H1 (cell line): ENCODE measurements at regions of chr18 and their contacts with region 1.

Region 1: DNA sequence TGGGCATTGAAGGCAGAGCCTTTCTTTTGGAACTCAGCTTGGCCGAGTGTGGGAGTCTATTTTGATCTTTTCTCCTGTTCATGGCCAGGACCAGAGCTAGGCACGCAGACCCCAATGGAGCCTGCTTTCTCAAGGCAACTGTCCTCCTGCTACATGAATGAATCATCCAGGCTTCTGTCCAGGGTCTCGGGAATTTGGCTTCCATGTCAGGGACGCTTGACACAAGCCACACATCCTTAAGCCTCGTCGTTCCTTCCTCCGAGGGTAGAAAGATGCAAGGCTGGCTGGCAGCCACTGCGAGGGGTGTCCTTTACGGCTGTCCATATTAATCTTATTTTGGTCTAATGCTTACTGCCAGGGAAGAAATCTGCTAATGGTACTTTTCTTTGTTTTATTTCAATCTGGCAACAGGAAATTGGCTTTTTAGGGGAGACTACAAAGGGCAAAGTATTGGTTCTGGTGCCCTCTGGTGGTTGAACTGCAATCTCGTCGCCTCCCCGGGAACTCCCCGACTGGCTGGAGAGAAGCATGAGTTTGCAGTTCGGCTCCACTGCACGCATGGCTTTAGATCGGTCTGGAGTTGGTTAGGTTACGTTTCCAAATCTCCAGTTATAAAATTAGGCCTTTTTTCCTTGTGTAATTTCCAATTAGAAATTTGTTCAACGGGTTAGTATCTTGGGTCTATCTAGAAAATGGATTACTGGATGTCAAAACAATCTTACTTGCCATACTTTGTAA is 135.2 kb downstream of the ALPK2 start:
- DNase-seq: peak; percentile 54 to 86
- H3K4me3 ChIP-seq: no peak overlapping the region
- H3K27ac ChIP-seq: no peak overlapping the region
- H3K4me1 ChIP-seq: peaks cover 0 to 3% (median 1%) of the 10 kb centered on the region in 4 experiments; a peak in 3 of 7 replicates
- H3K27me3 ChIP-seq: no peaks in the 10 kb centered on the region
- CTCF ChIP-seq: peak; percentile 80 to 88 (median 88)
- EP300 ChIP-seq: no peak
- POLR2A ChIP-seq: no peak
- RAD21 ChIP-seq: peak; percentile 89 to 93

Region 2: GRCh38 chr18:58338961-58339592 is 154.6 kb before region 1 on chr18:
- CTCF ChIA-PET with region 1: interaction called, 13 read pairs
- POLR2A ChIA-PET with region 1: no interaction called
- DNase-seq: peak; percentile 29 to 61
- H3K4me3 ChIP-seq: peak overlapping the region in 2 of 4 experiments; percentile 1 to 51; a peak in 3 of 8 replicates
- H3K27ac ChIP-seq: no peak overlapping the region; the same call in 1 of the 2 replicates
- H3K4me1 ChIP-seq: peaks cover 12 to 51% (median 37%) of the 10 kb centered on the region in 4 experiments
- H3K27me3 ChIP-seq: no peaks in the 10 kb centered on the region
- CTCF ChIP-seq: no peak
- EP300 ChIP-seq: no peak
- POLR2A ChIP-seq: no peak
- RAD21 ChIP-seq: no peak

Region 3: GRCh38 chr18:58402247-58402646 is 91.4 kb before region 1 on chr18:
- CTCF ChIA-PET with region 1: interaction called, 62 read pairs
- POLR2A ChIA-PET with region 1: interaction called, 4 read pairs
- DNase-seq: no peak
- H3K4me3 ChIP-seq: no peak overlapping the region
- H3K27ac ChIP-seq: no peak overlapping the region
- H3K4me1 ChIP-seq: peaks cover 0 to 2% (median under 1%) of the 10 kb centered on the region in 4 experiments; a peak in 4 of 7 replicates
- H3K27me3 ChIP-seq: no peaks in the 10 kb centered on the region
- CTCF ChIP-seq: no peak
- EP300 ChIP-seq: no peak
- POLR2A ChIP-seq: no peak
- RAD21 ChIP-seq: no peak

Region 4: GRCh38 chr18:58416704-58417683 is 76.7 kb before region 1 on chr18:
- CTCF ChIA-PET with region 1: interaction called, 10 read pairs
- POLR2A ChIA-PET with region 1: no interaction called
- DNase-seq: no peak
- H3K4me3 ChIP-seq: no peak overlapping the region
- H3K27ac ChIP-seq: no peak overlapping the region
- H3K4me1 ChIP-seq: no peaks in the 10 kb centered on the region
- H3K27me3 ChIP-seq: 0 out of 7 replicates have a peak, but pooled peaks cover 0 to 2% (median 0%) of the 10 kb centered on the region in 4 experiments
- CTCF ChIP-seq: no peak
- EP300 ChIP-seq: no peak
- POLR2A ChIP-seq: no peak
- RAD21 ChIP-seq: no peak

Region 5: DNA sequence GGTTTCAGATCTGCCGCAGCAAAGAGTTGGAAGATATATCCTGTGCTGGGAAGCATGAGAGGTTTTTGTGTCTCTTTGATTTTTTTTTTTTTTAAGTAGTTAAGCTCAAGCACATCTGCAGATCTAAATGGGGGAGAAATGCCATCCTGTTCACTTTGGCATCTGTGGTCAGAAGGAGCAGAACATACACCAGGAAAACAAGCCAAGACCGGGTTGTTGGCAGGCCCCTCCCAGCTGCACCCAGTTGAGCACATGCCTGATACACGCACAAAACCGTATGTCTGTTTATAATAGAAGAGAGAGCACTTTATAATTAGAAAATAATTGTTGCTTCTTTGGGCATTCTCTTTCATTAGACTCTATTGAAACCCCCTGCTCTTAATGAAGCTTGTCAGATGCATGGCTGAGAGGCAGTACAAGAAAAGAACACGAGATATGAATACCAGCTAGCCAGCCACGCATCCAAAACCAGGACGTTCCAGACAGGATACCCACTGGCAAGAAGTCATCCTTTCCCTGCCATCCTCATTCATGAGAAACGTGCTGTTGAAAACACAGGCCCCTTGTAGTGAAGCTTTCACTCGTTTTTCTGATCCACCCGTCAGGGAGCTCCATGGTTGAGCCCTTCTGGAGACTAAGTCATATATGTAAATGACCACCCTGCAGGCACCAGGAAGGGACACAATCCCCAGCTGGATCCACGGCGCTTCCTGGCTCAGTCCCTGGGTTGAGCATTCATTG is 17.0 kb before region 1 on chr18:
- CTCF ChIA-PET with region 1: interaction called, 41 read pairs
- POLR2A ChIA-PET with region 1: no interaction called
- DNase-seq: no peak
- H3K4me3 ChIP-seq: no peak overlapping the region
- H3K27ac ChIP-seq: no peak overlapping the region
- H3K4me1 ChIP-seq: peaks cover 0 to 4% (median 0%) of the 10 kb centered on the region in 4 experiments; a peak in 1 of 7 replicates
- H3K27me3 ChIP-seq: no peaks in the 10 kb centered on the region
- CTCF ChIP-seq: no peak
- EP300 ChIP-seq: no peak
- POLR2A ChIP-seq: no peak
- RAD21 ChIP-seq: no peak

Region 6: GRCh38 chr18:58511897-58512581 is 18.4 kb after region 1 on chr18:
- CTCF ChIA-PET with region 1: interaction called, 22 read pairs
- POLR2A ChIA-PET with region 1: interaction called, 3 read pairs
- DNase-seq: peak; percentile 75
- H3K4me3 ChIP-seq: peak overlapping the region; percentile 11 to 48 (median 32); a peak in 5 of 8 replicates
- H3K27ac ChIP-seq: peak overlapping the region; percentile 78
- H3K4me1 ChIP-seq: peaks cover 11 to 19% (median 16%) of the 10 kb centered on the region in 4 experiments
- H3K27me3 ChIP-seq: no peaks in the 10 kb centered on the region
- CTCF ChIP-seq: no peak
- EP300 ChIP-seq: peak in 1 of 2 experiments; percentile 62; a peak in 1 of 3 replicates
- POLR2A ChIP-seq: no peak
- RAD21 ChIP-seq: no peak

Region 7: GRCh38 chr18:58624011-58624410 is 130.3 kb after region 1 on chr18:
- CTCF ChIA-PET with region 1: no interaction called
- POLR2A ChIA-PET with region 1: no interaction called
- DNase-seq: no peak
- H3K4me3 ChIP-seq: no peak overlapping the region
- H3K27ac ChIP-seq: no peak overlapping the region
- H3K4me1 ChIP-seq: peaks cover 0 to 8% (median 4%) of the 10 kb centered on the region in 4 experiments; a peak in 5 of 7 replicates
- H3K27me3 ChIP-seq: no peaks in the 10 kb centered on the region
- CTCF ChIP-seq: no peak
- EP300 ChIP-seq: no peak
- POLR2A ChIP-seq: no peak
- RAD21 ChIP-seq: no peak

Region 8: DNA sequence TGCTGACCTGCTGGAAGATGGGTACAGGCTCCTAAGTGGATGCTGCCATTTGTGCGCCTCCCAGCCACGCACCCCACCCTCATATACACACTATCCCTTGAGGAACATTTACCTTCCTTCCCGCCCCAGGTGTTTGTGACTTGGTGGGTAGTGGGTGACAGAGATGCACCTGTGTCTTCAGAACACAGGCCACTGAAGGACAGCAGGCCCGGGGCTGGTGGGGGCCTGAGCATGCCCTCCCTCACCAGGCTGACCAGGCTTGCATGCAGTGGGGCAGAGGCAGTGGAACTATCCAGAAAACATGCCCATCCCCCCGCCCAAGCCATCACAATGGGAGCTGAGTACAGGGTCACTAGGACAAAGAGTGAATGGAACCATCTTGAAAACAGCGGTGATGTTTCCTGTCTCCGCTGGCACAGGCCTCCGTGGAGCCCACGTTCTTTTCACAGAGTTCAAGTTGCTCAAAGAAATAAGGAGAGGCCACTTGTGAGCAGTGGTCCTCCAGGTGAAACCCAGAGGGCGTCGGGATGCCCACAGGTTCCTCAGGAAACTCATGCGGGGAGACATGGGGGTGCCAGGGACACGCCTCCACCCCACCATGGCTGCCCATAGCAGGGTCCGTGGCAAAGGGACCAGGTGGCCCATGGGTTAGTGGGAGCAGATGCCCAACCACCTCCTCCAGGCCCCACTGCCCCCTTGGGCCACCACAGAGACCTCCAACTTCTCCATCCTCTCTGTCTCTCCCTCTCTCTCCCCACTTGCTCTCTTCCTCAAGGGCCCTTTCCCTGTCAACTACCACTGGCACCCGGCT is 268.5 kb after region 1 on chr18:
- CTCF ChIA-PET with region 1: interaction called, 34 read pairs
- POLR2A ChIA-PET with region 1: no interaction called
- DNase-seq: peak in 1 of 2 experiments; percentile 46
- H3K4me3 ChIP-seq: no peak overlapping the region
- H3K27ac ChIP-seq: no peak overlapping the region
- H3K4me1 ChIP-seq: peaks cover 0 to 7% (median 0%) of the 10 kb centered on the region in 4 experiments; a peak in 3 of 7 replicates
- H3K27me3 ChIP-seq: no peaks in the 10 kb centered on the region
- CTCF ChIP-seq: no peak
- EP300 ChIP-seq: no peak
- POLR2A ChIP-seq: no peak
- RAD21 ChIP-seq: no peak